ENCODE measurements at regions of chr2 and their contacts with region 1.

Region 1: GRCh38 chr2:21175895-21176646 is 52.3 kb downstream of the TDRD15 start:
- DNase-seq: peak in 15 of 42 donors; percentile 13 to 69 (median 32)

Region 2: GRCh38 chr2:21251216-21251980 is 75.3 kb after region 1 on chr2:
- intact Hi-C with region 1: no loop called
- DNase-seq: peak in 1 of 42 donors; percentile 15

Region 3: DNA sequence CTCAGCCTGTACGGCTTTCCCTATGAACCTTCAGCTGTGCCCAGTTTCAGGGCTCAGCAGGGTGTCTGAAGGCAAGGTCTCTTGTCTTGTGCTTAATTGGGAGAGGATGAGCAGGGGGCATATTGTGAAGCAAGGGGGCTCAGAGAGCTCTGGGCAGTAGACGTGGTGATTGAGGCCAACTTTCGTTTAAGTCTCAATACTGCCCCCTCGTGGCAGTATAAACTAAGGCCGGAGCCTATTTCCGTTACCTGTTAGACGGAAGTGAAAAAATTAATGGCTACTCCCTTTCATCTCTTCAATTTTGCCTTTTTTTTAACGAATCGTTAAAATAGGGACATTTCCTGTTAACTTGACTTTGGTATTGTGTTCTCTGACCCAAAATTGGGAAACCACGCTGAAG is 141.1 kb after region 1 on chr2:
- intact Hi-C with region 1: loop called (anchors 2 kb)
- DNase-seq: peak; percentile 13 to 92 (median 74)

Region 4: GRCh38 chr2:21395366-21395765 is 219.3 kb after region 1 on chr2:
- intact Hi-C with region 1: loop called (anchors 10 kb)
- DNase-seq: peak in 37 of 42 donors; percentile 9 to 79 (median 47)

Measured in head of caudate nucleus (tissue), 42 donors.